HepG2 (cell line): ENCODE measurements at regions of chr9 and their contacts with region 1.

Region 1: DNA sequence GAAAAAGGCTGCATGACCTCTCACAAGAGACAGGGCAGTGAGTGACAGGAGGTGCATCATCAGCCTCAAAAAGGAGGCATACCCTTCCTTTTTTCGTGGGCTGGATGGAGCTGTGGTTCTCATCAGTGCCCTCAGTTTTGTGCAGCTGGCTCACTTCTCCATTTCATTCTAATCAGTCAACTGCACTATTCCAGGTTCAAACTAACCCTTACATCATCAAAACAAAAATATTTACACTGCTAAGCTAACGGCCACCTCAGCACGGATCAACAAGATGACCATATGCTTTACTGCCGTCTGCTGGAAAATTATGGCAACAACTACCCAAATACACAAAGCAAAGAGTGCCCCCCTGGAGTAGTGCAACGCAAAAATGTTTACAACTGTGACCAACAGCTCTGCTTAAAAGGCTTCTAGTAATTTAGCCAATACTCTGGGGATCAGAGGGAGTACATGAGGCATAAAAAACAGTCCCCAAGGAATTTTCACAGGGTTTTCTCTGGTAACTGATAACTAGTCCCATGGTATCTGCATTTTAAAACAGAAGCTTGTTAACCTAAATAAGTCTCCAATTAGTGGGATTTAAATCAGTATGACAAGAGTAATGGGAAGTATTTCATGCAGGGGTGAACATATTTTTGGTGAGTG is 10.8 kb downstream of the KCNV2 start:
- DNase-seq: peak; percentile 58
- ATAC-seq: peak; percentile 97
- H3K4me3 ChIP-seq: no peak overlapping the region
- H3K27ac ChIP-seq: no peak overlapping the region
- H3K4me1 ChIP-seq: peaks cover 10% of the 10 kb centered on the region
- H3K27me3 ChIP-seq: no peaks in the 10 kb centered on the region
- CTCF ChIP-seq: peak; percentile 81
- EP300 ChIP-seq: no peak
- POLR2A ChIP-seq: no peak
- RAD21 ChIP-seq: peak; percentile 66

Region 2: DNA sequence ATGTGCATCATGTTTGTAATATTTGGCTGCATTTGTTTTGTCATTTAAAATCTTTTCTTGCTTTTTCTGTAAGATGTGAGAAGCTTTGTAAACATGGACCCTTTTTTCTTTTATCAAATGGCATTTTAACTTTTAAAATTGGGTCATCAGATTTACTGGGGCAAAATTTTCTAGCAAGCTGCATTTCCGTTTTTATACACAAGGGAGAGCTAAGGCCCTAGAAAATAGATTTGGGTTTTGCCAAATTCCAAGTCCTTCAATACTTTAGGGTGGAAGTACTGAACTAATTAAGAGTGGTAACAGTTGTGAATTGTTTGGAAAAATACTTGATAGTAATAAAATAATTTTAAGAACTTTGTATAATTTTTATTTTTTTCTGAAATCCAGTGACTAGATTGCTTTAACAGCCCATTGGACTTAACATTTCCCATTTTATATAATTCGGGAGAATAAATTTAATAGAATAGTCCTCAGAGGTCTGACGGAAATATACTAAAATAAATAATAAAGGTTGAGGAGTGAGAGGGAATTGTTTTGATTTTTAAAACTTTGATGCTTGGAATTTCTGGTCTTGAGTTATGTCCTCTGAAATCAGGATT is 595.5 kb before region 1 on chr9:
- CTCF ChIA-PET with region 1: interaction called, 3 read pairs
- POLR2A ChIA-PET with region 1: no interaction called
- in situ Hi-C with region 1: no loop called
- intact Hi-C with region 1: loop called (anchors 10 kb)
- DNase-seq: no peak
- ATAC-seq: no peak
- H3K4me3 ChIP-seq: no peak overlapping the region
- H3K27ac ChIP-seq: no peak overlapping the region
- H3K4me1 ChIP-seq: no peaks in the 10 kb centered on the region
- H3K27me3 ChIP-seq: no peaks in the 10 kb centered on the region
- CTCF ChIP-seq: peak; percentile 38
- EP300 ChIP-seq: no peak
- POLR2A ChIP-seq: no peak
- RAD21 ChIP-seq: peak; percentile 31; the same call in 1 of the 2 replicates

Region 3: GRCh38 chr9:2255128-2255527 is 473.0 kb before region 1 on chr9:
- CTCF ChIA-PET with region 1: no interaction called
- POLR2A ChIA-PET with region 1: no interaction called
- in situ Hi-C with region 1: no loop called
- intact Hi-C with region 1: loop called (anchors 2 kb)
- DNase-seq: peak; percentile 17
- ATAC-seq: peak; percentile 93
- H3K4me3 ChIP-seq: no peak overlapping the region
- H3K27ac ChIP-seq: no peak overlapping the region
- H3K4me1 ChIP-seq: no peaks in the 10 kb centered on the region
- H3K27me3 ChIP-seq: no peaks in the 10 kb centered on the region
- CTCF ChIP-seq: peak; percentile 65
- EP300 ChIP-seq: no peak
- POLR2A ChIP-seq: no peak
- RAD21 ChIP-seq: no peak

Region 4: DNA sequence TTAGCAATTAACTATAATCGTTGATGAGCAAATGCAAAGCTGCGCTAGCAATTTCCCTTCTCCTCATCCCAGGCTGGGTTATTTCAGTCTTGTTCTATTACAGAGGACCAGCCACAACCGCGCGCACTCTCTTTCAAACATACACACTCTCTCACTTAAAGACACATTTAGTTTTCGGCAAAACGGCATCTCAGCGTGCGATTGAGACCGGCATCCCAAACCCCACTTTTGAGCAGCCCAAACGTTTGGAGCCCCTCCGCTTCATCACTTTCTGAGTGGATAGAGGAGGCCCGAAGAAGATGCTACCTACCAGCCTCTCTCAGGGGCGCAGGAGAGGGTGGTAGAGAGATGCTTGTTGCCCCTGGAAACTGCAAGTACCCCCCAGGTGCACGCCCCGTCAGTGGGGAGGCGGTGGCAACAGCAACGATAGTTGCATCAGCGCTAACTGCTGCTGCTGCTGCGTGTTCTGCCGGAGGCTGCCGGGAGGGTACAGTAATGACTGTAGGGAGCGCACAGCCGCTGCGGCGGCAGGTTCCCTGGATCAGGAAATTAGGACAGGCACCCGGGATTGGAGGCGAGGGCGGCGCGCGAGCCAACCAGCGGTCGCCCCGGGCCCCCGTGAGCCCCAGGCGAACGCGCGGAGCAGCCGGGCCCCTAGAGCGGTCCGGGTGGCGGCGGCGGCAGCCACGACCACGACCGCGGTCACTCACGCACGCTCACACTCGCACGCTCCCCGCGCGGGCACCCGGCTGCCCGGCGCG is 107.0 kb before region 1 on chr9:
- CTCF ChIA-PET with region 1: no interaction called
- POLR2A ChIA-PET with region 1: no interaction called
- in situ Hi-C with region 1: no loop called
- intact Hi-C with region 1: loop called (anchors 5 kb)
- DNase-seq: peak; percentile 36
- ATAC-seq: peak; percentile 83
- H3K4me3 ChIP-seq: peak overlapping the region; percentile 49 to 74 (median 65); a peak in 5 of 6 replicates
- H3K27ac ChIP-seq: no peak overlapping the region
- H3K4me1 ChIP-seq: peaks cover 24% of the 10 kb centered on the region
- H3K27me3 ChIP-seq: peaks cover 4 to 21% of the 10 kb centered on the region in 2 experiments; a peak in 4 of 5 replicates
- CTCF ChIP-seq: peak; percentile 32; the same call in 1 of the 2 replicates
- EP300 ChIP-seq: no peak
- POLR2A ChIP-seq: no peak
- RAD21 ChIP-seq: peak; percentile 33; the same call in 1 of the 2 replicates